ENCODE measurements at regions of chr1 and their contacts with region 1.

Region 1: GRCh38 chr1:38990738-38991639 is at the start of gene AKIRIN1:
- DNase-seq: peak; percentile 88 to 99
- H3K4me3 ChIP-seq: peak within 1 kb of the TSS; percentile 82
- H3K27ac ChIP-seq: peak within 1 kb of the TSS; percentile 88 to 89
- H3K4me1 ChIP-seq: peaks cover 0 to 3% of the 10 kb centered on the region in 2 donors
- H3K27me3 ChIP-seq: no peaks in the 10 kb centered on the region
- CTCF ChIP-seq: peak in 2 of 3 experiments; percentile 31 to 48
- total RNA-seq, gene AKIRIN1: 29.6 TPM

Region 2: GRCh38 chr1:38873027-38873969 is 117.7 kb before region 1 on chr1 and contains the start of gene MYCBP:
- intact Hi-C with region 1: loop called (anchors 5 kb)
- DNase-seq: peak; percentile 81 to 97
- H3K4me3 ChIP-seq: peak within 1 kb of the TSS; percentile 76 to 96
- H3K27ac ChIP-seq: peak within 1 kb of the TSS; percentile 45 to 74
- H3K4me1 ChIP-seq: peaks cover 8 to 12% of the 10 kb centered on the region in 2 donors
- H3K27me3 ChIP-seq: no peaks in the 10 kb centered on the region
- CTCF ChIP-seq: no peak
- total RNA-seq, gene MYCBP: 0.64 TPM

Region 3: GRCh38 chr1:39026051-39026865 is 35.3 kb after region 1 on chr1 and contains the start of gene NDUFS5:
- intact Hi-C with region 1: loop called (anchors 2 kb)
- DNase-seq: peak; percentile 39 to 95
- H3K4me3 ChIP-seq: peak within 1 kb of the TSS; percentile 64 to 71
- H3K27ac ChIP-seq: peak within 1 kb of the TSS; percentile 92 to 96
- H3K4me1 ChIP-seq: peaks cover 0 to 10% of the 10 kb centered on the region in 2 donors
- H3K27me3 ChIP-seq: no peaks in the 10 kb centered on the region
- CTCF ChIP-seq: no peak
- total RNA-seq, gene NDUFS5: 194 TPM